ENCODE measurements at regions of chr17 and their contacts with region 1.

Region 1: DNA sequence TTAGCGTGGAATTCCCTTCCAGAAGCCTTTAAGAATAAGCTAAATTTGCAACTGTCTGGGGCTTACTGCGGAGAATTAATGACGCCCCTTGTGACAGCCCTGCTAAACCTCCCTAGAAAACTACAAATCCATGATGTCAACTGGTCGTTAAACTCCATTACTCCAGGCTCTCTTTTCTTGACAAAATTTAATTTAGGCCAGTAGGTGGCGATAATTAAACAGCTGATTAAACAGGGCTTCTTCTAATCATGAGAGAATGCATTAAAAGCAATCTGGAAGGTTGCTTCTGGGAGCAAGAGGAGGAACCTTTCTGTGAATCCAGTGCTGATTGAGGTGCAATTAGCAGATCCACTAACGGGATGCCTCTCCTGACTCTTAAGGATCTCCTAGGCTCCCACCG is 8.1 kb upstream of the NLRP1 start:
- DNase-seq: no peak
- H3K4me3 Mint-ChIP-seq: no peak overlapping the region
- H3K27ac Mint-ChIP-seq: no peak overlapping the region
- H3K4me1 Mint-ChIP-seq: peaks cover 2% of the 10 kb centered on the region
- H3K27me3 Mint-ChIP-seq: peaks cover 19% of the 10 kb centered on the region

Region 2: DNA sequence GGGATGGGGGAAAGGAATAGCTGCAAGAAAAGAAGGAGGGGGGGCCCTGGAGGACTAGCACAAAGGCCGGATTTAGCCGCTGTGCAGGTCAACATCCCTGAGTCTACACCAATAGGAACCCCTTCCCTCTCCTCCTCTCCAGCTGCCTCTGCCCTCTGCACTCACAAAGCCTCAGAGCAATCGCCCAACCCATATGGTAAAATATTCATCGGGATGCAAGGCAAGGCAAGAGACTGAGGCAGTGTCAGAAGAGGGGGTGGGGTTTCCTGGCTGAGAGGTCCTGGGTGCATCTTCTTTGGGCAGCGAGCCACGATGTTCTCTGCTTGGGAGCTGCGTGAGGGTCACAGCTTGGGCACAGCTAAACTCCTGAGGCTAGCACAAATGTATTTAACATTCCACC is 107.4 kb after region 1 on chr17:
- intact Hi-C with region 1: no loop called
- DNase-seq: no peak
- H3K4me3 Mint-ChIP-seq: no peak overlapping the region
- H3K27ac Mint-ChIP-seq: no peak overlapping the region
- H3K4me1 Mint-ChIP-seq: no peaks in the 10 kb centered on the region
- H3K27me3 Mint-ChIP-seq: peaks cover 6% of the 10 kb centered on the region

Region 3: GRCh38 chr17:6421700-6422604 is 829.6 kb after region 1 on chr17:
- intact Hi-C with region 1: loop called (anchors 1 kb)
- DNase-seq: peak; percentile 48
- H3K4me3 Mint-ChIP-seq: no peak overlapping the region
- H3K27ac Mint-ChIP-seq: peak overlapping the region; percentile 34
- H3K4me1 Mint-ChIP-seq: peaks cover 2% of the 10 kb centered on the region
- H3K27me3 Mint-ChIP-seq: peaks cover 50% of the 10 kb centered on the region

Region 4: GRCh38 chr17:6435968-6436367 is 843.6 kb after region 1 on chr17:
- intact Hi-C with region 1: loop called (anchors 1 kb)
- DNase-seq: peak; percentile 44
- H3K4me3 Mint-ChIP-seq: no peak overlapping the region
- H3K27ac Mint-ChIP-seq: no peak overlapping the region
- H3K4me1 Mint-ChIP-seq: no peaks in the 10 kb centered on the region
- H3K27me3 Mint-ChIP-seq: peaks cover 59% of the 10 kb centered on the region

Measured in activated T-helper 1 cell treated with anti-CD3 and anti-CD28 coated beads, Interleukin-12 subunit alpha, Interleukin-12 subunit beta, Interleukin-2, Interleukin-4 antibody, amounts not matched to agents 30 ng/mL and 10 ng/mL and 1 ng/mL, durations not matched to agents 14 hours and 24 hours and 36 hours (primary cell).